ENCODE measurements at regions of chr15 and their contacts with region 1.

Region 1: DNA sequence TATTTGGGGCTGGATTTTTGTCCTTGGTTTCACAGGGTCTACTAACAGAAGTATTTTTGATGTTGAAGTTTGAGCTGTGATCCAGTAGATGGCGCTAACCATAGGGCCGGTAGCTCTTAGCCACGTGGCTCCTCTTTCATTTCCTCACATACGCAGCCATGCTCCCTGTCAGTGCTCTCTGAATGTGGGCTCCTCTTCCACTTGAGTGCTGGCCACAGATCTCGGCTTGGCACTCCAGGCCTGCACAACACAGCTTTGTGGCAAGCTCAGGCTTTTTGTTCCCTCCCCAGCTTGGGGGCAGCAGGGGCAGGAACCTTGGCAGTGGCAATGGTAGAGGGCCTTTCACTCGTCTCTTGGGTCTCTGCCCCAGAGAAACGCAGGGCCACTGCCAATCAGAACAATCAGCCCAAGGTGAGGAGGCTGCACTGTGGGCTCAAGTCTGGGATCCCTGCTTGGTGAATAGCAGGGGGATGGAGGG is 18.6 kb upstream of the DNAAF4 start:
- DNase-seq: no peak
- H3K4me3 ChIP-seq: peak overlapping the region in 1 of 4 donors; percentile 12
- H3K27ac ChIP-seq: no peak overlapping the region
- H3K4me1 ChIP-seq: no peaks in the 10 kb centered on the region
- H3K27me3 ChIP-seq: no peaks in the 10 kb centered on the region
- CTCF ChIP-seq: peak; percentile 40 to 49 (median 45)
- EP300 ChIP-seq: no peak
- POLR2A ChIP-seq: no peak

Region 2: DNA sequence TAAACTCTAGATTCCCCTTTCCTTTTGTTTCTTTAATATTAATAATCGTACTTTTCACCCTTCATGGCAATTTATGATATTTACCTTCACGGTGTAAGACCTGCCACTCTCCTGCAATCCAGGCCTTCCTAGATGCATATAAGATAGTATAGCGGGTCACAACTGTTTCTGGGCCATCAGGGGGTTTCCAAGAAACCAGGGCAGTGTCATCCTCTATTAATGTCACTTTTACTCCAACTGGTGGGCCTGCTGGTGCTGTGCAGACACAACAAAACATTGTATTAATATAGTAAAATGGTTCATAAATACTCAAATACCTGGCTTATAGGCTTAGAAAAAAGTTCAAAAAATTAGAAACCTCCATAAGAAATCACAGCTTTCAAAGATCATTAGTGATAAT is 110.5 kb after region 1 on chr15:
- intact Hi-C with region 1: loop called (anchors 2 kb)
- DNase-seq: no peak
- H3K4me3 ChIP-seq: no peak overlapping the region
- H3K27ac ChIP-seq: no peak overlapping the region
- H3K4me1 ChIP-seq: no peaks in the 10 kb centered on the region
- H3K27me3 ChIP-seq: no peaks in the 10 kb centered on the region
- CTCF ChIP-seq: no peak
- EP300 ChIP-seq: no peak
- POLR2A ChIP-seq: no peak

Region 3: DNA sequence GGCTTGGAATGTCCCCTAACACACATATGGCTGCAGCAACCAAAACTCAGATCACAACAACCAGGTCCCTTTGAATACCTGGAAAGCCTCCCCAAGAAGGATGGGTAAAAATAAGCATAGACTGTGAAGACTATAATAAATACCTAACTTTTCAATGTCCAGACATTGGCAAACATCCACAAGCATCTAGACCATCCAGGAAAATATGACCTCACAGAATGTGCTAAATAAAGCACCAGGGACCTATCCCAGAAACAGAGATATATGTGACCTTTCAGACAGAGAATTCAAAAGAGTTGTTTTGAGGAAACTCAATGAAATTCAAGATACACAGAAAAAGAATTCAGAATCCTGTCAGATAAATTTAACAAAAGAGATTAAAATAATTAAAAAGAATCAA is 357.6 kb after region 1 on chr15:
- intact Hi-C with region 1: no loop called
- DNase-seq: no peak
- H3K4me3 ChIP-seq: no peak overlapping the region
- H3K27ac ChIP-seq: no peak overlapping the region
- H3K4me1 ChIP-seq: peaks cover 10 to 16% (median 14%) of the 10 kb centered on the region in 4 donors
- H3K27me3 ChIP-seq: no peaks in the 10 kb centered on the region
- CTCF ChIP-seq: no peak
- EP300 ChIP-seq: no peak
- POLR2A ChIP-seq: no peak